AG04450 (cell line): ENCODE measurements at regions of chr2 and their contacts with region 1.

Region 1: DNA sequence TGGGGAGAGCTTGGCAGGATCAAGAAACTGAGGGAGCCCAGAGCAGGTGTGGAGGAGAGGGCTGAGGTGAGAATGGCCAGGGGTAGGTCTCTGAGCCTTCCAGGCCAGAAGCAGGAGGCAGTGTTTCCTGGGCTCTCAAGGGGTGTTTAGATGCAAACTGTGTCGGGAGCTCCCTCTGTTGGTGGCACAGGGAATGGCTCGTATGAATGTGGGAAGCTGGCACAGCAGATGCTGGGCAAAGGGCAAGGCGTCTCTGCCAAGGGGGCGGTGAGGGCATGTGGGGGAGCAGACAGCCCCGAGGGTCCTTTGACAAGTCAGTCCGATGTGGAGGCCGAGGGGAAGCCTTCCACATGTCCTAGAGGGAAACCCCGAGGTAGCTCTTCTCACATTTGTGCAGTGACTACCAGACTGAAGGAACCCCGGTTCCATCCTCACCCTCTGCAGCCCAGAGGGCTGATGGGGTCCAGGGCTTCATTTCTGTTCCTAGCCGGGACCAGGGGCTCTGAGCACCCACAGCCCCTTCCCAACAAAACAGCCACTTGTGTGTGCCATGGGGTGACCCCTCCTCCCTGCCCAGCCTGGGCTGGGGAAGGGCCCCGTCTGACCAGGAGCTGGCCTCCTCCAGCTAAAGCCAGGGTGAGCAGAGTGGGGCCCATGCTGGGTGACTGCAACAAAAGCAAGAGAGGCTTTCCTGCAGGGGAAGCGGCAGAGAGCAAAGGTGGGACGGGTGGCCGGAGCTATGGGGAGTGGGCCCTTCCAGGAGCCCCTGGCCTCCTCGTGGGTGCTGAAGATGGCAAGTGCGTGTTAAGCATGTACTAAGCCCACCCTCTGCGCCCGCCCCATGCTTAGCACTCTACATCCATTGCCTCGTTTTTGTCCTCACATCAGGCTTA is 103.4 kb downstream of the SEPTIN10 start:
- DNase-seq: peak; percentile 33
- H3K4me3 ChIP-seq: no peak overlapping the region
- H3K27ac ChIP-seq: no peak overlapping the region
- H3K27me3 ChIP-seq: no peaks in the 10 kb centered on the region
- CTCF ChIP-seq: peak; percentile 98

Region 2: DNA sequence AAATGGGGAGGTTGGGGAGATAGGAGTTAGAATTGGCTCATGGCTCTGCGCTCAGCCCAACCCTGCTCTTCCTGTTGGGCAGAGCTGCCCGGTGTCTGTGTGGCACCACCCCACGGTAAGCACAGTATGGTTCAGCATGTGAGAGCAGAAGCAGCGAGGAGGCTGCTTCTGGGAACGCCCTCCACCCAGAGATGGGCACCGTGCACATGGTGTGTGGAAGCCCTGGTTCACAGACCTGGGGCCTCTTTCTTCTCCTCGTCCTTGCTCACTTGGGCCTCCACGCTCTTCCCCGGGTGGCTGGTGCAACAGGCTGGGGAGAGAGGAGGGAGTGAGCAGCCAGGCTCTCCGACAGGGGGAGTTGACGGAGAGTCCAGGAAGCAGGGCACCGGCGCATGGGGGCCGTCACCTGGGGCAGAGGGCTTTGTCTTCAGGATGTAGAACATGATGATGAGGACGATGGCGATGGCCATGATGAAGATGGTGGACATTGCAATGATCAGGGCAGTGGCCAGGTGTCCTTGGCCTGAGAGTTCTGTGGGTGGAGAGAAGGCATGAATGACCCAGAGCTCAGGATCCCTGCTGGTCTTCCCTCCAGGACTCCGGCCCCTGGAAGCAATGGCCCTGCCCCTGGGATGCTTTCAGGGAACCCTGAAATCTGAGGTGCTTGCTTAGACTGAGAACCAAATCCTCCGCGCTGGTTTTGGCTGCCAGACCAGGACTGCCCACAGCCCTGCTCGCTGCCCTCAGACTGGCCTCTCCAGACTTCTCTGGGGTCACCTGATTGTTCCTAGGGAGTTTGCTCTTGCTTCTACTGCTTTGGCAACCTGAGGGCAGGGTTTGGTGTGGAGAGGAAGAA is 599.6 kb before region 1 on chr2:
- CTCF ChIA-PET with region 1: no interaction called
- POLR2A ChIA-PET with region 1: no interaction called
- DNase-seq: no peak
- H3K4me3 ChIP-seq: no peak overlapping the region
- H3K27ac ChIP-seq: no peak overlapping the region
- H3K27me3 ChIP-seq: peaks cover 21% of the 10 kb centered on the region
- CTCF ChIP-seq: no peak

Region 3: DNA sequence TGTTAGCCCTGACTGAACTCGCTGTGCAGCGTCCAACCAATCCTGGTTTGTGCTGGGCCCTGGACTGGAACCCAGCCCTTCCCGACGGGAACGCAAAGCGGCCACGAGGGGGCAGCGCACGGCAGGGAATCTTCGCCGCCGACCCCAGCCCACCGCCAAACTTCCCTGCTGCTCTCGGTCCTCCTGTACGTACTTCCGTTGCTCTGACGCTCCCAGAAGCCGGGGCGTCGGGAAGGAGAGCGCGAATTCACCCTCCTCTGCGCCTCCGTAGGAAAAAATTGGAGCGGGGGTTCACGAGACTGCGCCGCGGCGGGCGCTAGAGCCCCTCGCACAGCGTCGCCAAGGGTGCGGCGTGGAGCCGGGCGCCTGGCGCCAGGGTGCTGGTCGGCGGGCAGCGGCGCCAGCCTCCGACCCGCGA is 382.3 kb before region 1 on chr2:
- CTCF ChIA-PET with region 1: interaction called, 30 read pairs
- POLR2A ChIA-PET with region 1: interaction called, 6 read pairs
- DNase-seq: peak; percentile 80
- H3K4me3 ChIP-seq: peak overlapping the region; percentile 93
- H3K27ac ChIP-seq: peak overlapping the region; percentile 47
- H3K27me3 ChIP-seq: peaks cover 1% of the 10 kb centered on the region
- CTCF ChIP-seq: peak; percentile 89

Region 4: GRCh38 chr2:109497463-109497862 is 12.9 kb before region 1 on chr2:
- CTCF ChIA-PET with region 1: interaction called, 38 read pairs
- POLR2A ChIA-PET with region 1: interaction called, 3 read pairs
- DNase-seq: peak; percentile 68
- H3K4me3 ChIP-seq: no peak overlapping the region
- H3K27ac ChIP-seq: peak overlapping the region; percentile 78
- H3K27me3 ChIP-seq: no peaks in the 10 kb centered on the region
- CTCF ChIP-seq: no peak